ENCODE measurements at regions of chr15 and their contacts with region 1.

Region 1: GRCh38 chr15:69976366-69976994 is 121.2 kb downstream of the TLE3 start:
- DNase-seq: peak; percentile 37
- H3K4me3 Mint-ChIP-seq: no peak overlapping the region
- H3K27ac Mint-ChIP-seq: no peak overlapping the region
- H3K4me1 Mint-ChIP-seq: no peaks in the 10 kb centered on the region
- H3K27me3 Mint-ChIP-seq: peaks cover 16% of the 10 kb centered on the region

Region 2: DNA sequence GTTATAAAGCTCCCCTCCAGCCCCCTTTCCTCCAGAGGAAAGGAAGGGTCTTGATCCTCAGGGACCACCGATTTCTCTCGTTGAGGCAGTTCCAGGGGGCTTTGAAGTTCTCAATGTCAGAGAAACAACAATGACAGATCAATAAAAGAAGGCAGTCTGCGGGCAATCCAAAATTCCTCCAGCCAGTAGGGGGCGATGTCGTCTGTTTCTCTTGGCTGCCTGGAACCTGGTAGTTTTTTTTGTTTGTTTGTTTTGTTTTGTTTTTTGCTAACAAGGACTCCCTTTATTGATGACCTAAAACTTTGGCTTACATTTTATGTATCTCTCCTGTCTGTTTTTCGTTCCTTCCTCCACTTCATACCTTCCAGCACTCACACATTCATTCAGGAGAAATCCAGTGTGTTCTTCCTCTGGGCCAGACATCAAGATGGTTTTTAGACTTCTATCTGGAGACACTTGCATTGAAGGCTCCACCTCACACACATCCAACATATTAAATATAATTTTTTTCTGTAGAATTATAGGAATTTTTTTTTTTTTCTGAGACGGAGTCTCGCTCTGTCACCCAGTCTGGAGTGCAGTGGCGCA is 247.2 kb before region 1 on chr15:
- intact Hi-C with region 1: loop called (anchors 10 kb)
- DNase-seq: peak; percentile 51
- H3K4me3 Mint-ChIP-seq: no peak overlapping the region
- H3K27ac Mint-ChIP-seq: no peak overlapping the region
- H3K4me1 Mint-ChIP-seq: peaks cover 33% of the 10 kb centered on the region
- H3K27me3 Mint-ChIP-seq: peaks cover 22% of the 10 kb centered on the region

Region 3: DNA sequence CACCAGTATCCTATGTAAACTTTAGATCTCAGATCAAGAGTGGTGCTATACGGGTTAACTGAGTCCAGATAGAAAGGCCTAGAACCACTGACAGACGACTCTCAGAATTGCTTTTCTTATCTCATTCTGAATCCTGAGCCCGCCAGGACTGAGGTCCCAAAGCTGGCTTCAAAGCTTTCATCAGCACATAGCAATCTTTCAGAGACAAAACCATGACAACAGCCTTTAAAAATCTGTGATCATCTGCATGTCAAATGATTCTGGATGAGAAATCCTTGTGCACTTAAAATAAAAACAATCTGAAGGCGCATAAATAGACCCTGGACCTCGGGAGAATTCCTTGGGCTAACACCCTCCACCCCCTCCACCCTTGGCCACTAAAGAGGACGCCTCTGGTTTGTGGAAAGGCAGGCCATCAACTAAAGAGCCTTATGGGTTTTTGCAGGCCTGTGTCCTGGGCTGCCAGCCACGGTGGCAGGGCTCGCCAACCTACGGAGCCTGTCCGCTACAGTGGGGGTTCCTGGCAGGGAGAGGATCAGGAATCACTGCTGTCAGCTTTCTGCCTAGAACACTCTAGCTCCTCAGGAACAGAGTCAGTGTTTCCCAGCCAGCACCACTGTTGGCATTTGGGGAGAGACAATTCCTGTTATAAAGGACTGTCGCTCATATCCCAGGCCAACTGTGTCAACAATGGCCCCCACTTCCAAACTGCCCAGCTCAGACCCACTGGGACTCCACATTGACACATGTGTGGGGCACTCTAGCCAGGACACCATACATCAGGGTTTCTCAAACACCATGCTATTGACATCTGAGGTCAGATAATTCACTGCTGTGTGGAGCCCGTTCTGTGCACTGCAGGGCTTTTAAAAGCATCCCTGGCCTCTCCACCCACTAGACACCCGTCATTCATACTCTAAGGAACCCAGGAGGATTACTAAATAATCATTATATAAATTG is 101.0 kb after region 1 on chr15:
- intact Hi-C with region 1: no loop called
- DNase-seq: no peak
- H3K4me3 Mint-ChIP-seq: no peak overlapping the region
- H3K27ac Mint-ChIP-seq: no peak overlapping the region
- H3K4me1 Mint-ChIP-seq: peaks cover 5% of the 10 kb centered on the region
- H3K27me3 Mint-ChIP-seq: no peaks in the 10 kb centered on the region